Colonic mucosa (tissue), 4 donors: ENCODE measurements at regions of chr16 and their contacts with region 1.

Region 1: GRCh38 chr16:7584561-7584960 is 251.9 kb downstream of the RBFOX1 start:
- DNase-seq: no peak
- H3K4me3 ChIP-seq: no peak overlapping the region
- H3K27ac ChIP-seq: no peak overlapping the region
- H3K4me1 ChIP-seq: no peaks in the 10 kb centered on the region
- H3K27me3 ChIP-seq: no peaks in the 10 kb centered on the region
- CTCF ChIP-seq: no peak

Region 2: GRCh38 chr16:7638306-7638705 is 53.7 kb after region 1 on chr16:
- intact Hi-C with region 1: loop called (anchors 10 kb)
- DNase-seq: no peak
- H3K4me3 ChIP-seq: no peak overlapping the region
- H3K27ac ChIP-seq: no peak overlapping the region
- H3K4me1 ChIP-seq: no peaks in the 10 kb centered on the region
- H3K27me3 ChIP-seq: no peaks in the 10 kb centered on the region
- CTCF ChIP-seq: no peak